ENCODE measurements at regions of chr4 and their contacts with region 1.

Region 1: DNA sequence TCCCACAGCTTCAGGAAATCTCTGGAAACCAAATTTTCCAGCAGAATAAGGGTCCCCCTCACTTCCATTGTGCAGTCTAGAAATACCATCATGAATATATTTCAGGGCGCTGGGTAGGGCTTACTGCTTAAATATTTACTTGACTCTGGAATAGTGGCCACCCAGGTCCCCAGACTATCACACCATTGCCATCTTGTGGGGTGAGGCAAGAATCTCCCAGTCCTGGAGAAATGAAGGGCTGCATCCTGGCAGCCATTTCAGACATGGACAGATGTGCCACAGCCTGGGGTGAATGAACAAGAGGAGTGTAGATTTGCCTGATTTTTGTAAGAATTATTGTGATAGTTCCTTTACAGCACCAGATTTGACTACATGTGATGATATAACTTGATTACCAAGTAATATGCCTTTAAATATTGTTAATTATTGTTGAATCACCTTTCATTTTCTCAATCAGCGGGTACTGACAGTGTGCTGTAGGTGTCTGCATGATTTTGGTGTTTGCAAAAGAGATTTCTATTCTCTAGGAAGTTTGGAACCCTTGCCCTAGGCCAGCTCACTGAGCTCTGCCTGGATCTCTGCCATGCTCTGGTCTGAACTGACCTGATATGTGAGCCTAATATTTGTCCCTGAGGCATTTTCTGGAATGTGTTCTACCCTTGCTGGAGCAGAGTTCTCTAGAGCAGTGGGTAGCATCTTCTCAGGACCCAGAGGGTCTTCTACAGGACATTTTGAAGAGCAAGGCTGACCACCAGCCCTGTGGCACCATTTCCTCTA is 183.4 kb downstream of the KIT start:
- DNase-seq: no peak
- ATAC-seq: no peak
- H3K4me3 ChIP-seq: no peak overlapping the region
- H3K27ac ChIP-seq: no peak overlapping the region
- H3K4me1 ChIP-seq: no peaks in the 10 kb centered on the region
- H3K27me3 ChIP-seq: no peaks in the 10 kb centered on the region
- CTCF ChIP-seq: peak in 1 of 3 experiments; percentile 18; a peak in 1 of 6 replicates
- EP300 ChIP-seq: no peak
- POLR2A ChIP-seq: no peak
- RAD21 ChIP-seq: peak; percentile 40; the same call in 1 of the 2 replicates

Region 2: GRCh38 chr4:54683616-54684346 is 157.4 kb before region 1 on chr4:
- CTCF ChIA-PET with region 1: no interaction called
- POLR2A ChIA-PET with region 1: no interaction called
- RAD21 ChIA-PET with region 1: no interaction called
- SMC1A ChIA-PET with region 1: no interaction called
- in situ Hi-C with region 1: no loop called
- intact Hi-C with region 1: loop called (anchors 2 kb)
- DNase-seq: no peak
- ATAC-seq: peak; percentile 76
- H3K4me3 ChIP-seq: no peak overlapping the region
- H3K27ac ChIP-seq: no peak overlapping the region
- H3K4me1 ChIP-seq: peaks cover 2% of the 10 kb centered on the region; the same call in 1 of the 2 replicates
- H3K27me3 ChIP-seq: no peaks in the 10 kb centered on the region
- CTCF ChIP-seq: peak; percentile 52 to 61 (median 60); a peak in 5 of 6 replicates
- EP300 ChIP-seq: no peak
- POLR2A ChIP-seq: no peak
- RAD21 ChIP-seq: peak; percentile 64